Gastrocnemius medialis (tissue), 4 donors: ENCODE measurements at regions of chr3 and their contacts with region 1.

Region 1: DNA sequence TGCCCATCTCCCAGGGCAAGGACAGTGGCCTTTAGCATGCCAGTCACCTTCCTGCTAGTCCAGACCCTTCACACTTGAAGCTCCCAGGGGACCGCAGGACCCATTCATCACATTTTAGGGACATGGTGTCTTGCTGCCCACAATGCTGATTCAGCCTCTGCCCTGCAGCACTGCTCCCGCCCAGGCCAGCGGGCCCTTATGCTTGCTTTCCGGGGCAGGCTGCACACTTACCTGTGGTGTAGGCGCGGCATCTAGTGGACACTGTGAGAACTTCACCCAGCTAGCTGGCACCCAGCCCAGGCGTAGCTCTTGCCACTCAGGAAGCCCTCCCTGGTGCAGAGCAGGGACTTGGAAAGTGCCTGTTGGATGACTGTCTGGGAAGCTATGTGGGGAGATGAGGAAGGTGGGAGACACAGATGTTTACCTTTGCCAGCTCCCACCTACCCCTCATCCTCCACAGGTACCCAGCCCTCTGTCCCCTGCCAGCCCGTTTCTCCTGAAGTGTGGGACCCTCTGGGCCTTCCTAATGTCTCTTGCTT is 26.2 kb upstream of the NR2C2 start:
- DNase-seq: peak; percentile 72 to 81
- ATAC-seq: peak; percentile 77 to 83
- H3K4me3 ChIP-seq: no peak overlapping the region
- H3K27ac ChIP-seq: no peak overlapping the region
- H3K4me1 ChIP-seq: no peaks in the 10 kb centered on the region
- H3K27me3 ChIP-seq: no peaks in the 10 kb centered on the region
- CTCF ChIP-seq: peak; percentile 95 to 99 (median 98)
- POLR2A ChIP-seq: no peak

Region 2: DNA sequence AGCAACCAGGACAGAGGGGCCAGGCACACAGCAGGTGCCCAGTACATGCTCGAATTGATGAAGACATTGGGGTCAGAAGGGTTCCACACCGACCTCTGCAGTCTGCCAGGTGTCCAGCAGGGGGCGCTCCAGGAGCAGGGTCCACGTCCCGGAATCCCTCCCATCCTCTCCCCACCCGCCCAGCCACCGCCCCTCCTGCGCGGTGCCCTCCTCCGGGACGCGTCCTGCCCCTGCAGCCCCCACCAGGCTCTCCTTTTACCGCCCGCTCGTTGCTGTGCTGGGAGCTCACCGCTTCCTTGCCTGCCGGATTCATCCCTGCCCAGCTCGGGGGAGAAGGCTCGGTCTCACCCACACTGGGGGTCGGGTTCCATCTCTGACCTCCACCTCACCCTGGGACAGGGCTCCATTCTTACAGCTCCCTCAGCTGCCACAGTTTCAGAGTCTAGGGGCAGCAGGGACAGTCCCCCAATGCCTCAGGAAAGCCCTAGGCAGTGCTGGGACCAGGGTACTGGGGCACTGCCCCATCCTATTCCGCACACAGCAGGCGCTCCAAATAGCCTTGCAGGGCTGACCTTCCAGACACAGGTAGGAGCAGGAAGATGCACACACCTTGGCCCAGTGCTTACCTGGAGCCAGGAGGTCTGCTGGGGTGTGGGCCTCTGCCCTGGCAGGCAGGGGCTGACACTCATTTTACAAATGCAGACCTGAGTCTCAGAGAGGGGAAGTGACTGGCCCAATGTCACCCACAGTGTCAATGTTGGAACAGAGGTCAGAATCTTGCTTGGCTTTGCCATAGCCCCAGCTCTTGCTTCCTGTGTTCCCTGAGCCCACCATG is 412.0 kb before region 1 on chr3:
- in situ Hi-C with region 1: no loop called
- intact Hi-C with region 1: loop called (anchors 5 kb)
- DNase-seq: peak in 1 of 2 donors; percentile 55
- ATAC-seq: peak; percentile 52 to 75
- H3K4me3 ChIP-seq: no peak overlapping the region
- H3K27ac ChIP-seq: peak overlapping the region; percentile 11 to 59 (median 40)
- H3K4me1 ChIP-seq: peaks cover 0 to 4% of the 10 kb centered on the region in 2 donors
- H3K27me3 ChIP-seq: no peaks in the 10 kb centered on the region
- CTCF ChIP-seq: peak; percentile 90 to 98 (median 96)
- POLR2A ChIP-seq: no peak

Region 3: GRCh38 chr3:14651440-14652251 is 269.5 kb before region 1 on chr3 and contains the start of gene CCDC174:
- in situ Hi-C with region 1: loop called in 1 of 4 experiments (anchors 25 kb)
- intact Hi-C with region 1: no loop called
- DNase-seq: peak; percentile 95 to 98
- ATAC-seq: peak; percentile 99 to 100
- H3K4me3 ChIP-seq: peak within 1 kb of the TSS; percentile 67 to 85 (median 78)
- H3K27ac ChIP-seq: peak within 1 kb of the TSS; percentile 89 to 96 (median 90)
- H3K4me1 ChIP-seq: peaks cover 21 to 26% of the 10 kb centered on the region in 2 donors
- H3K27me3 ChIP-seq: no peaks in the 10 kb centered on the region
- CTCF ChIP-seq: no peak
- POLR2A ChIP-seq: peak; percentile 72 to 88
- total RNA-seq, gene CCDC174: 11.1 to 22.2 (median 14.8) TPM

Region 4: DNA sequence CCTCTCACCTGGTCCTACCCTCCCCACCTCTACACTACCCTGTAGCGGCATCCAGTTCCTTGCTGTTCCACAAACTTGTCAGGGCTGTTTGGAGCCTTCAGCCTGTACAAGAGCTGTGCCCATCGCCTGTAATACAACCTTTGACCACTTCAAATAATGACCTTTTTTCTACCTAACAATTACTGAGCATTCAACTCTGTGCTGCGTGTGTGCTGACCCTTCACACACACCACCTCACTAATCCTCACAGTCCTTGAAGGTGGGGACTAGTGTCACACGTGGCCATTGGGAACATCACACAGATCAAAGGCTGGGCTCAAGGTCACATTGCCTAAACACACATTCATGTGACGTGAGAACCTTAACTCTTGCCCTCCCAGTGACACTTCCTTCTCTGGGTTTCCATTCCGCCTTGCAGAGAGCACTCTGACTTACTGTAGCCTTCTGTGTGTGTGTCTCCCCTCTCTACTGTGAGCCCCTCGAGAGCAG is 243.1 kb before region 1 on chr3:
- in situ Hi-C with region 1: loop called (anchors 5 to 25 kb)
- intact Hi-C with region 1: loop called (anchors 2 kb)
- DNase-seq: no peak
- ATAC-seq: no peak
- H3K4me3 ChIP-seq: no peak overlapping the region
- H3K27ac ChIP-seq: no peak overlapping the region
- H3K4me1 ChIP-seq: no peaks in the 10 kb centered on the region
- H3K27me3 ChIP-seq: no peaks in the 10 kb centered on the region
- CTCF ChIP-seq: no peak
- POLR2A ChIP-seq: no peak

Region 5: GRCh38 chr3:14791343-14791945 is 129.7 kb before region 1 on chr3:
- in situ Hi-C with region 1: loop called (anchors 5 to 25 kb)
- intact Hi-C with region 1: loop called (anchors 1 kb)
- DNase-seq: peak; percentile 18 to 46
- ATAC-seq: peak in 1 of 2 donors; percentile 59
- H3K4me3 ChIP-seq: no peak overlapping the region
- H3K27ac ChIP-seq: no peak overlapping the region
- H3K4me1 ChIP-seq: peaks cover 0 to 4% of the 10 kb centered on the region in 2 donors
- H3K27me3 ChIP-seq: no peaks in the 10 kb centered on the region
- CTCF ChIP-seq: peak; percentile 32 to 67 (median 62)
- POLR2A ChIP-seq: no peak

Region 6: DNA sequence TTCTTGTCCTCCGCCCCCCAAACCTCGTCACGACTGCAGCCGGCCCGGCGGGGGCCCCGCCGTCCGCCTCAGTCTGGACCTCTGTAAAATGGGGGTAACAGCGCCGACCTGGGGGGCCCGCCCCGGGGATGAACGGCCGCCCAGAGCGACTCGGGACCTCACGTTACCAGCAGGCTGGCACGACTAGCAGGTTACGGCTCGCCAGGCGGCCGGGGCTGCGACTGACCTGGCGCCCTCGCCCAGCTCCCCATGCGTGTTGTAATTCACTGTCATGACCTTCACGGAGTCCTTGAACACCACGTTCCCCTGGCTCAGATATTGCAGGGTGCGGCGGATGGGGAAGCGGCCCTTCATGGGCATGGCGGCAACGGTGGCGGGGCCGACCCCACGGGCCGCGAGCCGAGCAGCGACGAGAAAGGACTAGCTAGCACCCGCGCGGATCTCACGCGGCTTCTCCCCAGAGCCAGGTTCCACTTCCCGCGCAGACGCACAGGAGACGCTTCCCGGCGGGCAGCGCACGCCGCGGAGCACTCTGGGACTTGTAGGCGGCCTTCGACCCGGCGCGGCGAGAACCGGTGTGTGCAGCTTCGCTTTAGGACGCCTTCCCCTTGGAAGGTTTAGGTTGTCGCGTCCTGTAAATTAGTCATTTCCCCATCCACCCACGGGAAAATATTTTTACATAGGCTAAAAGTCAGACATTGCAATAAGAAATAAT is 143.8 kb after region 1 on chr3 and contains the start of gene MRPS25:
- in situ Hi-C with region 1: loop called in 3 of 4 experiments (anchors 10 to 25 kb)
- intact Hi-C with region 1: loop called (anchors 5 kb)
- DNase-seq: peak; percentile 87 to 91
- ATAC-seq: peak; percentile 93 to 94
- H3K4me3 ChIP-seq: peak within 1 kb of the TSS; percentile 74 to 99 (median 85)
- H3K27ac ChIP-seq: peak within 1 kb of the TSS; percentile 83 to 97 (median 94)
- H3K4me1 ChIP-seq: peaks cover 18 to 20% of the 10 kb centered on the region in 2 donors
- H3K27me3 ChIP-seq: no peaks in the 10 kb centered on the region
- CTCF ChIP-seq: no peak
- POLR2A ChIP-seq: peak; percentile 94
- total RNA-seq, gene MRPS25: 71.4 to 88.6 (median 73.9) TPM